Right ventricle myocardium inferior (tissue), 1 donor: ENCODE measurements at regions of chr19 and their contacts with region 1.

Region 1: GRCh38 chr19:32287811-32288227 is 57.6 kb upstream of the ZNF507 start:
- DNase-seq: peak; percentile 86
- ATAC-seq: peak; percentile 95

Region 2: GRCh38 chr19:32253683-32254508 is 33.9 kb before region 1 on chr19:
- intact Hi-C with region 1: no loop called
- DNase-seq: no peak
- ATAC-seq: no peak

Region 3: GRCh38 chr19:32570081-32570785 is 282.4 kb after region 1 on chr19:
- intact Hi-C with region 1: loop called (anchors 5 kb)
- DNase-seq: no peak
- ATAC-seq: peak; percentile 67